Mammary epithelial cell (primary cell): ENCODE measurements at regions of chr10 and their contacts with region 1.

Region 1: GRCh38 chr10:3197348-3198003 is 24.9 kb upstream of the PITRM1 start:
- DNase-seq: peak; percentile 77
- H3K4me3 ChIP-seq: peak overlapping the region; percentile 28 to 45 (median 30)
- H3K27ac ChIP-seq: no peak overlapping the region
- H3K4me1 ChIP-seq: peaks cover 16% of the 10 kb centered on the region
- H3K27me3 ChIP-seq: peaks cover 12% of the 10 kb centered on the region
- CTCF ChIP-seq: peak; percentile 71 to 98

Region 2: GRCh38 chr10:3010816-3011460 is 186.5 kb before region 1 on chr10:
- CTCF ChIA-PET with region 1: no interaction called
- dilution Hi-C with region 1: no loop called
- in situ Hi-C with region 1: no loop called
- intact Hi-C with region 1: no loop called
- DNase-seq: peak; percentile 37
- H3K4me3 ChIP-seq: no peak overlapping the region
- H3K27ac ChIP-seq: no peak overlapping the region
- H3K4me1 ChIP-seq: no peaks in the 10 kb centered on the region
- H3K27me3 ChIP-seq: no peaks in the 10 kb centered on the region
- CTCF ChIP-seq: no peak

Region 3: DNA sequence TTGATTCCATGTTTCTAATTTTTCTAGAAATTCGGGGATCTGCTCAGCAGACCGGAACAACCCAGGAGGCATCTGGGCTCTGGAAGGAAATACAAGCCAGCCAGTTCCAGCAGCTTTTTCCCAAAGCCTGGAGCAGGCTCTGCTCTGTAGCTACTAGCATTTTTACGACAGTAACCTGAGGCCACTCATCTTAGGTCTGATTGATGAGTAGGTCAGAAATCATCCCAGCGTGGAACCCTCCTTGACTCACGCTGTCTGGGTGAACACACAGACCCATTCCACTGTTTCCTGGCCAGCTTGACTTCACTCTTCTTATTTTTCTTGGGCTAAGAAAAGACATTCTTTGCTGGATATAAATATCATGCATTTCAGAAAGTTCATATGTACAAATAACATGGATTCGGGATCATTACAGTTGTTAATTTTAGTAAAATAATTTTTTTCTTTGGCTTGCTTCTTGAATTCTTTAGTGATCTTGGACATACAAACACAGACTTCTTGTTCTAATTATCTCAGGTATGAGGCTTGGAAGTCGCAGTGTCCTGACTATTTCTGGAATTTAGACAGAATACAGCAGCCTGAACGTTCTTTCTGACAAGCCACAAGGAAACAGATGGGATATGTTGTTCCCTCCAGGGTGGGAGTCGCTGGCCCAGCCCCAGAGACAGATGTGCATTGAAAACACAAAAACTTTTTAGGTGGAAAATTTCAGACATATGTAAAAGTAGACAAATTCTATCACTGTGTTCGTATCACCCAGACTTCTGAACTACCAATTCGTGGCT is 29.7 kb after region 1 on chr10:
- CTCF ChIA-PET with region 1: interaction called, 3 read pairs
- dilution Hi-C with region 1: no loop called
- in situ Hi-C with region 1: no loop called
- intact Hi-C with region 1: loop called (anchors 1 kb)
- DNase-seq: peak; percentile 87
- H3K4me3 ChIP-seq: peak overlapping the region in 1 of 3 experiments; percentile 2
- H3K27ac ChIP-seq: peak overlapping the region; percentile 81
- H3K4me1 ChIP-seq: peaks cover 32% of the 10 kb centered on the region
- H3K27me3 ChIP-seq: no peaks in the 10 kb centered on the region
- CTCF ChIP-seq: no peak

Region 4: DNA sequence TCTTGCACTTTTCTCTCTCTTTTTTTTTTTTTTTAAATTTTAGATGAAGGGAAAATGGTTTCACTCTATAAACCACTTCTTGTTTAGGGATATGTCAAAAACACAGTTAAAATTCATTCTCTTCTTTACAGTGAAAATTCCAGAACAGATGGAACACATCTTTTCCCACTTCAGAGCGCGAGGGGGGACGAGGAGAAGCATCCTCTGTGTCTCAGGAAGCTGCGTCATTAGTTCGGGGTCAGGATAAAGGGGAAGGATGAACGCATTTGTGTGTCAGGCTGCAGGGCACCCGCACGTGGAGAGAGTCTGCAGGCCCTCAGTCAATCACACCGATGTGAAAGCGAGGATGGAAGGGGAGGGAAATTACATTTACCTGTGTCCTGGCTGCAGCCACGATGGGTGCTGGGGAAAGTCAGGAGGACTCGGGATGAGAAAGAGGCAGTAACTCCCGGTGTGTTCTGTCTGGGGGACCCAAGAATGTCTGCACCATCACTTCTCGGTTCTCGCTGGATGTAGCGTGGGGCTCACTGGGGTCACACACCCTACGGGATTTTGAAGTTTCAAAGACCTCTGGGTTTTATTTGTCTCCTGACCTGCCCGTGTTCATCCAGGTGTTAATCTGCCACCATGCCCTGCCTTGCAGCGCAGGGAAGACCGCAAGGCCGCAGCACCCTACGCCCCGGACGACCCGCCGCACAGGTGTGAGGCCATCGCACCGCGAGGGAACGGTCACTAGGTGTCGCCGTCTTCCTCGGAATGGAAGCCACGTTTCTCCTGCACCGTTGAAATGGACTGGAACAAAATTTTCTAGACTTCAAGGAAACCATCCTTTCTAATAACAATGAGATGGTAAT is 41.8 kb after region 1 on chr10:
- CTCF ChIA-PET with region 1: no interaction called
- dilution Hi-C with region 1: no loop called
- in situ Hi-C with region 1: no loop called
- intact Hi-C with region 1: loop called (anchors 1 kb)
- DNase-seq: peak; percentile 26
- H3K4me3 ChIP-seq: no peak overlapping the region
- H3K27ac ChIP-seq: no peak overlapping the region
- H3K4me1 ChIP-seq: no peaks in the 10 kb centered on the region
- H3K27me3 ChIP-seq: no peaks in the 10 kb centered on the region
- CTCF ChIP-seq: peak; percentile 73 to 83

Region 5: DNA sequence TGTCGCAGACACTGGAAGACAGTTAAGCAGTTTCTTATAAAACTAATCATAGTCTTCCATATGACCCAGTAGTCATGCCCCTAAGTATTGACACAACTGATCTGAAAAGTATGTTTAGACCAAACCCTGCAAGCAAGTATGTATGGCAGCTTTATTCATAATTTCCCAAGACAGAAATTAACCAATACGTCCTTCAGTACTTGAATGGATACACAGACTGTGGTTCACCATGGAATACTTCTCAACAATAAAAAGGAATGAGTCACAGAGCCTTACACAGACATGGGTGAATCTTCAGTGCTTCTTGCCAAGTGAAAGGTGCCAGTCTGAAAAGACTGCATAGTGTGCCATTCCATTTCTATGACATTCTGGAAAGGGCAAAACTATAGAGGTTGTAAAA is 1578.3 kb after region 1 on chr10:
- CTCF ChIA-PET with region 1: no interaction called
- dilution Hi-C with region 1: loop called (anchors 25 kb)
- in situ Hi-C with region 1: loop called (anchors 25 kb)
- intact Hi-C with region 1: loop called (anchors 1 kb)
- DNase-seq: peak; percentile 94
- H3K4me3 ChIP-seq: no peak overlapping the region
- H3K27ac ChIP-seq: peak overlapping the region; percentile 83
- H3K4me1 ChIP-seq: peaks cover 36% of the 10 kb centered on the region
- H3K27me3 ChIP-seq: no peaks in the 10 kb centered on the region
- CTCF ChIP-seq: no peak